HEK293 (cell line): ENCODE measurements at regions of chr9 and their contacts with region 1.

Region 1: DNA sequence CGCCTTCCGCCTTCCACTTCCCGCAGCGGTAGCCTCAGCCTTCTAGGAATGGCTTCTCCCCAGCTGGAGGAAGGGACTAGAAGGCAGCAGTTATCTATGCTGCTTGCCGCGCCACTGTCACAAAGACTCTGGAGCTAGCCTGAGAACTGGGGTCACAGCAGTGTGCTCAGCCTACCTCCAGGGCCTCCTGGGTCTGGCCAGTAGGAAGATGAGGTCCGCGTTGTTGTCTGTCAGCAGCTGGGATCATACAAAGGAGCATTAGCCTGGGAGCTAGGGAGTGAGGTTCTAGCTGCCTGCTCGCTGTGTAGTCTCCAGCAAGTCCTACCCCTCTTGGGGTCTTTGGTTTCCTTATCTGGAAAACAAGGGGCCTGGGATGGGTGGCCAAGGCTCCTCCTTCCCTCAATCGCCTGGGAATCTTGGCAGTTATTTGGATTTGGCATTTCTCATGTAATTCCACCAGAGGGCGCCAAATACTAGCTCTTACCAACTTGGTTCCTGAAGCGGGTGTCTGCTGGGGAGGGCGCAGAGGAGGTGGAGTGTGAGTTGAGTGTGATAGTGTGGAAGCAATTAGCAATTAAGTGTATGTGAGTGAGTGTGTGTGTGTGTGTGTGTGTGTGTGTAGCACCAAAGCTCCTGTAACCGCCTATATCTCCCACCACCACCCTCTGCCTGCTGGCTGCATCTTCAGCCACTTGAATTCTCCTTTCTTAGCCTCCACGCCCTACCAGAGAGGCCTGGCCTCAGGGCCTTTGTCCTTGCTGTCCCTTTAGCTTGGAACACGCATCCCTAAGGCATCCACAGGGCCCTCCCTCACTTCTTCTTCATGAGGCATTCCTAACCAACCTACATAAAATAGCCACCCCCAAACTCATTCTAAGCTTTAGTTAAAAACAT is 97.1 kb downstream of the ENTREP1 start:
- H3K4me3 ChIP-seq: no peak overlapping the region
- H3K27ac ChIP-seq: no peak overlapping the region
- H3K4me1 ChIP-seq: no peaks in the 10 kb centered on the region
- CTCF ChIP-seq: peak; percentile 81

Region 2: DNA sequence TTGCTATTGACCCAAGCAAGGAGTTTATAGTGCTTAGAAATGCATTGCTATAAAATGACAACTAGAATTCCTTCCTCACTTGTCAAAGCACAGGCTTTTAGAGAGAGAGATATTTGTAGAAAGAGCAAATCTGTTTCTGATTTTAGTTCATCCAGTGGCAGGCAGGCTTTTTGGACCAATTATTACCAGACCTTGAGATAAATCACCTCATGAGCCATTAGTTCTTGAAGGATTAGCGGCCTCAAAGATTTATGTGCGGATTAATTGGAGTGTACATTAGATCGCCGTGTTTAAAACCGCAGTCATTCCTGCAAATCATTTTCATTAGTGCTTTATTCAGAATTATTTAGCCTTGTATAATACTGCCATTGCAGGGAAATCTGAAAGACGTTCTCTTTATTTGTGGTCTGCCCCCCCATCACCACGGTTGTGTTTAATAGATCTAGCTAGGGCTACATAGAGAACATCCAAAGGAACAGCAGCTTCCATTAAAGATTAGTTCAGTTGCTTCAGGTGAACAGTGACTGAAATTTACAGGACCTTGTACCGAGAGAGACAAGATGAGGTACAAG is 276.9 kb before region 1 on chr9:
- CTCF ChIA-PET with region 1: no interaction called
- POLR2A ChIA-PET with region 1: no interaction called
- H3K4me3 ChIP-seq: no peak overlapping the region
- H3K27ac ChIP-seq: no peak overlapping the region
- H3K4me1 ChIP-seq: no peaks in the 10 kb centered on the region
- CTCF ChIP-seq: no peak

Region 3: DNA sequence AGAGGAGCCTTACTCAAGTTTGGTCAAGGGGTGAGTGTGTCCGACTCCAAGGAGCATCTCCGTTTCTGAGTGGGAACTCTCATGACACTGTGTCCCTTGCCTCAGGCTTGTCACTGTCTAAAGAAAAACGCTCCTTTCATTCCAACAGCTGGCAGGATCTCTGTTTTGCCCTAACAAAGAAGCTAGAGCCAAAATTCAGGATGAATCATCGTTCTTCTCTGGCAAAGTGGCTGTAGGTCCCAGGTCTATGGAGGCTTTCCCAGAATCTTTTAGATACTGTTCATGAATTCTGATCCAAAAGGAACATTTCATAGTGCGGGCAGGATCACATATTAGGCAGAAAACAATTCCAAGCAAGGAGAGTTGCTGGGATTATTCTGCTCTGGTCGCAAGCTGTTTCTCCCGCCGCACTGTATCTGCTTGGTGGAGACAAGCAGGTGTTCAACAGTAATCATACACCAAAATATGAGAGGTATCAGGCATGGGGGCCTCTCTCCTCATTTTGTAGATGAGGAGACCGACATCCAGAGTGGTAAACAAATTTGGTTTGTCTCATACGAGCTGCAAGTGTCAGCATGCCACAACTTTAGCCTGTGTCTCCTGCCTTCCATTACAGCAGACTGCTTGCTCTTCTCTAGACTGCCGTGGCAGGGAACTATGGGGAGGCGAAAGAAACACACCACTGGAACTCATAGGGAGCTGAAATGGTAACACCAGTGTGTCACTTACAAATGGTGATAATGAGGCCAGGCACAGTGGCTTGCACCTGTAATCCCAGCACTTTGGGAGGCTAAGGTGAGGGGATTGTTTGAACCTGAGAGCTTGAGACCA is 24.6 kb before region 1 on chr9:
- CTCF ChIA-PET with region 1: interaction called, 12 read pairs
- POLR2A ChIA-PET with region 1: no interaction called
- H3K4me3 ChIP-seq: no peak overlapping the region
- H3K27ac ChIP-seq: no peak overlapping the region
- H3K4me1 ChIP-seq: no peaks in the 10 kb centered on the region
- CTCF ChIP-seq: no peak

Region 4: DNA sequence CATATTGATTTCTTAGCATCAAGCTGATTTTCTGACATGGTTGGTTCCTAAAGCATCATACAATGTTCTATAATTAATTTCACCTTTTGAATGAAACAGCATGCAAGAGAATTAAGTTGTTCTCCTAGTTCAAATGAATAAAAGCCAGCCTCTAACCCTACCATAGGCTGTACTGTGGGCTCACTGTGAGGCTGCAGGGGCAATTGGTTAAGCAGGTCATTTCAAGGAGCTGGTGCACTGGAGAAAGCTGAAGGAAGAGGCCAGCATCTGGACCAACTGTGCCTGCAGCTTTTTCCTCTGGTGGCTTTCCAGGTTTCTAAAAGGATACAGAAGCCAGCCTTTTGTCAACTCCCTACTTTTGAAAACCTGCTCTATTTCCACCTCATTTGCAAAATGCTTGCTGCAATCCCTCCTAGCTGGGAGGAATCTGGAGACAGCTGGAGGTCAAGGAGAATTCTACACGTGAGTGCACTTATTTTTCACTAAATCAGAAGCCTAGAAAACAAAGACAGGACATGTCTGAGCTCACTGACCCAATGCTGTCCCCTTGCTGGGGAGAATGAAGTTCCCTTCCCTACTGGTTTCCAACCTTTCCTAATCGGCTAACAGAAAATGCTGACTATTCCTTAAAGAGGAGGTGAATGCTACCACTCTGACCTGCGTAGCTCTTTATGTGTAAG is 91.1 kb after region 1 on chr9:
- CTCF ChIA-PET with region 1: interaction called, 10 read pairs
- POLR2A ChIA-PET with region 1: no interaction called
- H3K4me3 ChIP-seq: no peak overlapping the region
- H3K27ac ChIP-seq: no peak overlapping the region
- H3K4me1 ChIP-seq: no peaks in the 10 kb centered on the region
- CTCF ChIP-seq: no peak

Region 5: GRCh38 chr9:69549310-69550202 is 127.4 kb after region 1 on chr9:
- CTCF ChIA-PET with region 1: interaction called, 164 read pairs
- POLR2A ChIA-PET with region 1: no interaction called
- H3K4me3 ChIP-seq: no peak overlapping the region
- H3K27ac ChIP-seq: no peak overlapping the region
- H3K4me1 ChIP-seq: no peaks in the 10 kb centered on the region
- CTCF ChIP-seq: 0 out of 2 replicates have a peak, but pooled peaks have one; percentile 36

Region 6: DNA sequence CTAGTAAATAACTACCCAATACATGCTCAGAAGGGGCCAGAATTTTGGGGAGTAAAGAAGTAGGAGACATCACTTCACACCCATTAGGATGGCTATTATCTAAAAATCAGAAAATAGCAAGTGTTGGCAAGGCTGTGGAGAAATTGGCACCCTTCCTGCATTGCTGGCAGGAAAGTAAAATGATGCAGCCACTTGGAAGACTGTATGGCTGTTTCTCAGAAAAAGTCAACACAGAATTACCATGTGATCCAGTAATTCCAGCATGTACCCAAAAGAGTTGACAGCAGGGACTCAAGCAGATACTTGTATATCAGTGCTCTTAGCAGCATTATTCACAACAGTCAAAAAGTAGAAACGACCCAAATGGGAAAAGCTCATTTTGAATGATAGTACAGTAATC is 142.4 kb after region 1 on chr9:
- CTCF ChIA-PET with region 1: no interaction called
- POLR2A ChIA-PET with region 1: no interaction called
- H3K4me3 ChIP-seq: no peak overlapping the region
- H3K27ac ChIP-seq: no peak overlapping the region
- H3K4me1 ChIP-seq: no peaks in the 10 kb centered on the region
- CTCF ChIP-seq: no peak

Region 7: DNA sequence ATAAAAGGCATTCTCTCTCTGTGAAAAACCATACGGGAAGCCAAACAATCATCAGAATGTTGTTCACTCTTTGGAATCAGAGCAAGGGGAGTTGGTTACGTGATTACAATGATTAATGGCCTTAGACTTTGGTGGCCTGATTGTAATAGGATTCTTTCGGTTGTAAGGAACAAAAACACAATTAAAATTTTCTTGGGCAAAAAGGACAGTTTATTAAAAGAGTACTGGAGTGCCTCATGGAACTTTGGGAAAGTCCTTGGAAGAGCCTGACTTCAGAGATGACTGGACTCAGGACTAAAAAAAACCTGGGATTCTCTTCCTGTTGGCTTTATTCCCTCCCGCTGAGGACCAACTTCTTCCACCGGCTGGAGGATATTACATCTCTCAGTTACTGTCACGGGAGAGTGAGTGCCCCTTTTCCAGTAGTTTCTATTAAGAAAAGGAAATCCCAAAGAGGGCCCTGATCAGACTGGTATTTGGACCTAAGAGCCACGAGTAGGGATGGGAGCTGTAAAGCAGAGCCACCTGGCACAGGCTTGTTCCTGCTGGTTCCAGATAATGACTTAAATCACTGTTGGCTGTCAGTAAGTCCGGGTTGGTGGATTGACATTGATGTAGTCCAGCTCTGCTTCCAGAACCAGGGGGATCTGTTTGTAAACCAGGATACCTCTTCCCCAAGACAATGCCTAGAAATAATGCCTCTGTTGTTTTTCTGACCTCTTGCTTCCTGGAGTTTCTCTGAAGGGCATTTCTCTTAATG is 452.3 kb after region 1 on chr9:
- CTCF ChIA-PET with region 1: interaction called, 11 read pairs
- POLR2A ChIA-PET with region 1: no interaction called
- H3K4me3 ChIP-seq: no peak overlapping the region
- H3K27ac ChIP-seq: no peak overlapping the region
- H3K4me1 ChIP-seq: no peaks in the 10 kb centered on the region
- CTCF ChIP-seq: no peak

Region 8: GRCh38 chr9:69931340-69931739 is 509.2 kb after region 1 on chr9:
- CTCF ChIA-PET with region 1: interaction called, 11 read pairs
- POLR2A ChIA-PET with region 1: no interaction called
- H3K4me3 ChIP-seq: no peak overlapping the region
- H3K27ac ChIP-seq: no peak overlapping the region
- H3K4me1 ChIP-seq: no peaks in the 10 kb centered on the region
- CTCF ChIP-seq: no peak